Activated CD8-positive, alpha-beta T cell treated with anti-CD3 and anti-CD28 coated beads, Interleukin-2, amount 10 ng/mL, durations not matched to agents 7 days and 5 days (primary cell): ENCODE measurements at regions of chr1 and their contacts with region 1.

Region 1: DNA sequence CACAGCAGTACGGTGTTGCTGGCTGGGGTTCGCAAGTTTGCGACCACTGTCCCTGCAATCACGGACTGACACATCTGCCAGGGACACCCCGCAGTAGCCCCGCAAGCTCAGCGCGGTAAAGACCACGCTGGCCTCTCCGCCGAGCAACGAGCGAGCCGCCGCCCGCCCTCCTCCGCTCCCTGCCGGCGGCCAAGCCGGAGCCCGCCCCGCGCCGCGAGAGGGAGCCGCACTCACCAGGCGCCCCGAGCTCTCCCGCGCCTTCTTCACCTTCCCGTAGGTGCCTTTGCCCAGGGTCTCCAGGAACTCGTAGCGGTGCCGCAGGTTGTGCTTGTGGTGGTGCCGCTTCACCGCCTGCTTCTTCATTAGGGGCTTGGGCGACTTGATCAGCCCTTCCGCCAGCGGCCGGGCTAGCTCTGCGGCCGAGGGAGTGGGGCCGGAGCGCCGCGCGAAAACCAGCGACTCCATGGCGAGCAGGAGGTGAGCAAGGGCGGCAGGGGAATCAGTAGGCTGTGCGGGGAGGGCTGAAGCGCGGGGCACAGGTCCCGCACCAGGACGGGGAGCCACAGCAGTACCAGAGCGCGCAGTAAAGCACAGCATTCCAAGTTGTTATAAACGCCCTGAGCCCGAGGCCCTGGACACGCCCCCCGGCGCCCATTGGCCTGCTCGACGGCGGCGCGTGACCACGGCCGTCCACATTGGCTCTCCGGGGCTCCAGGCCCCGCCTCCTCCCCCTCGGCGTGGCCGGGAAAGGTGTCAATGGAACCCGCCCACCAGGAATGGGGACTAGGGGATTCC is at the start of gene NUAK2:
- DNase-seq: peak; percentile 69
- ATAC-seq: peak; percentile 79
- H3K4me3 Mint-ChIP-seq: peak within 1 kb of the TSS; percentile 87
- H3K27ac Mint-ChIP-seq: peak within 1 kb of the TSS; percentile 56
- H3K4me1 Mint-ChIP-seq: peaks cover 52% of the 10 kb centered on the region
- H3K27me3 Mint-ChIP-seq: peaks cover 36% of the 10 kb centered on the region
- total RNA-seq, gene NUAK2: 1.6 TPM

Region 2: GRCh38 chr1:205263580-205264190 is 57.7 kb before region 1 on chr1:
- CTCF ChIA-PET with region 1: interaction called, 15 read pairs
- POLR2A ChIA-PET with region 1: no interaction called
- DNase-seq: no peak
- ATAC-seq: no peak
- H3K4me3 Mint-ChIP-seq: no peak overlapping the region
- H3K27ac Mint-ChIP-seq: no peak overlapping the region
- H3K4me1 Mint-ChIP-seq: peaks cover 24% of the 10 kb centered on the region
- H3K27me3 Mint-ChIP-seq: no peaks in the 10 kb centered on the region

Region 3: DNA sequence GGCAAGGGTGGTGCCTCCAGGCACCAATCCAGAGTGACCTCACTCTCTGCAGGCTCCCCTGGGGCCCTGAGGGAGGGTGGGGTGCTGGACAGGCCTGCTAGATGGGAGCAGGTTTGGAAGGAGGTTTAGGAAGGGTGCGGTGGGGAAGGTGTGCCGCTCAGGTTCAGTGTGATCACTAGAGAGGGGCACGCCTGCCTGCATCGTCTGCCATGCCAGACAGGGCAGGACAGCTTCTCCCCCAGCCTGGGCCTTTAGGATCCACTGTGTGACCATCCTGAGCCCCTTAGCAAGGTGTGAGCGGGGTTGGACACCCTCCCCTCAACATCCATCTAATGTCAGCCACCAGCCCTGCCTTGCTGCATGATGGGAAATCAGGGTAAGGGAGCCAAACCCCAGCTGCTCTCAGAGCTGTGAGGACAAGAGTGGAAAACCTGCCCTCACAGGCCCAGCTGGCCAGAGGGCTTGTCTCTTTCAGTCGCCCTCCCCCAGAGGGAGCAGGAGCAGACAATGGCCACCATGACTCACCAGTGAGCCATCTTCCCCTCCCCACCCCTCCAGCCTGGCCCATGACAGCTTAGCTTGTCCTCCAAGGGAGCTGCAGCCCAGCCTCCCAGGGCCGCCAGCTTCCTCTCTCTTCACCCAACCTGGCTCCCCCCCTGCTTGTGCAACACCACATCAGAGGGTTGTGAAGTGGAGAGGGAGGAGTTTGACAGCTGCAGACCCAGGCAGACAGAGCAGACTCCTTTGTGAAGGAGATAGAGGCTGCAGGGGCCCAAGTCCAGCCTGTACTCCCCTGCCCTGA is 36.8 kb before region 1 on chr1:
- CTCF ChIA-PET with region 1: interaction called, 1,266 read pairs
- POLR2A ChIA-PET with region 1: interaction called, 34 read pairs
- DNase-seq: peak; percentile 95
- ATAC-seq: peak; percentile 67
- H3K4me3 Mint-ChIP-seq: peak overlapping the region; percentile 74
- H3K27ac Mint-ChIP-seq: peak overlapping the region; percentile 66
- H3K4me1 Mint-ChIP-seq: peaks cover 80% of the 10 kb centered on the region
- H3K27me3 Mint-ChIP-seq: peaks cover 23% of the 10 kb centered on the region

Region 4: DNA sequence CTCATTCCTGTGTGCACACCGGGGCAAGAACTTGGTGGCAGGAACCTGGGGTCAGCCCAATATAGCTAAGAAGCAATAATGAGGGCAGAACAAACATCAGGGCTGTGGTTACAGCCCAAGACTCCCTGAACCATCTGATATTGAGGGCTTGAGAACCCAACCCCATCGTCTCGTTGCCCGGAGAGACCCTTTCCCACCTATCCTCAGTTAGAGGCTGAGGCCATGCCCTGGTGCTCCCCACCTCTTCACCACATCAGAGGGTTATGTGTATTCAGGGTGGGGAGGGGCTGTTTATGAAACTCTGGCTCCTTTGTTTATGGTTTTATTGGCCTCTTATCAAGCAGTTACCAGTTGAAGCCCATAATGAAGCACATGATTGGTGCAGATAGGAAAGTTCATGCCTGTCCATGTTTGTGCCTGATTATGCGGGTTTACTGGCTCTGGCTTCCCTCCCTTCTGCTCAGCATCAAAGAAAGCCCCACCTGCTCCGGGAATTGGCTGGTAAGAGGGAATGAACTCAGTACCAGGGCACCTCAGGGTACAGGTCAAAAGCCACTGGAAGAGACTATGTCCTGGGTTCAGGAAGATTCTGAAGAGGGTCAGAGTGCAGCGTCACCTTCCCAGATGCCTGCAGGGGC is 14.3 kb before region 1 on chr1:
- CTCF ChIA-PET with region 1: interaction called, 44 read pairs
- POLR2A ChIA-PET with region 1: no interaction called
- DNase-seq: no peak
- ATAC-seq: no peak
- H3K4me3 Mint-ChIP-seq: no peak overlapping the region
- H3K27ac Mint-ChIP-seq: no peak overlapping the region
- H3K4me1 Mint-ChIP-seq: peaks cover 8% of the 10 kb centered on the region
- H3K27me3 Mint-ChIP-seq: no peaks in the 10 kb centered on the region

Region 5: DNA sequence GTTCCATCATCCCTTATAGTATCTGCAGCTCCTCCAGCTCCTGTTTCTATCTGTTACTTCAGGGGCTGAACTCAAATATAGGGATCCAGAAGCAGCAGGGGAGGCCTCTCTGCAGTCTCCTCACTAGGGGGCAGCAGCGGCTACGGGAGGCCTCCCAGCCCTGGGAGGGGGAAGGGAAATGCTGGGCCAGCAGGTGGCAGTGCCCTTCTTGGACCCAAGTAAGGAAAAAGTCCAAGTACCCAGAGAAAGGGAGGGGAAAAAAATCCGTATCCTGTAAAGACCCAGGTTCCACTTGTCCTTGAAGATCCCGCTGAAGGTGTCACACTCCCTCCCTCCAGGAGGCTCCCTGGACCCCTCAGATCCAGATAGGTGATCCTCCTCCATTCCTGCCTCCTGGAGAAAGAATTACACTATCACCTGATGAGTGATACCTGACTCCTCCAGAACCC is 14.3 kb after region 1 on chr1:
- CTCF ChIA-PET with region 1: interaction called, 66 read pairs
- POLR2A ChIA-PET with region 1: no interaction called
- DNase-seq: peak; percentile 84
- ATAC-seq: peak; percentile 90
- H3K4me3 Mint-ChIP-seq: no peak overlapping the region
- H3K27ac Mint-ChIP-seq: no peak overlapping the region
- H3K4me1 Mint-ChIP-seq: peaks cover 11% of the 10 kb centered on the region
- H3K27me3 Mint-ChIP-seq: peaks cover 38% of the 10 kb centered on the region